A673 (cell line): ENCODE measurements at regions of chr6 and their contacts with region 1.

Region 1: DNA sequence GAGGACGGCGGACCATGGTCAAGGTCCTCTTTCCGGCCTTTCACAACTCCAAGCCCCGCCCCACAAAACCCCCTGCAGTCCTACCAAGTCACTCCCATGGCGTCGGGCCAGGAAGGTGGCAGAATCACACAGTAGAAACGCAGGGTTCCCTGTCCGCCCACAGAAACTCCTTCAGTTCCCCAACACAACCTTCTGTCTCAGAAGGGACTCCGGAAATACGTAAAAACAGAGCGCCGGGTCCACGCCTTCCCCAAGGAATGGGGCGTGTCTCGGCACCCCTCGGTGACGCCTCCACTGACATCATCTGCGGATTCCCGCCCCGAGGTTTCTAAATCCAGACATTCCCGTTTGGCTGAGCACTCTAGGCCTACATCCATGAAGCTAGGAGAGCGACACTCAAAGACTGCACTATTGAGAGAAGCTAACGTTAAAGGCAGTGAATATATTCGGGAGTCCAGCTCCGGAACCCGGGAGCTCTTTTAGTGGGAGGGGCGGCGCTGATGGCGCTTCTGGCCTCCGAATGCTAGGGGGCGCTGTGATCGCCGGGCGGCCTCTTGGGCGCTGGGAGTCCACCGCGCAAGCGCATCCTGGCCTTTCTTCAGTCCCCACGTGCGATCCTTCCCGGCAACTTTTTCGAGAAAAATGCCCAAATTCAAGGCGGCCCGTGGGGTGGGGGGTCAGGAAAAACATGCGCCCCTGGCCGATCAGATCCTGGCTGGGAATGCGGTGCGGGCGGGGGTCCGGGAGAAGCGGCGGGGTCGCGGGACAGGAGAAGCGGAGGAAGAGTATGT is at the starts of genes BYSL and MED20:
- DNase-seq: peak; percentile 95
- H3K4me3 ChIP-seq: peak within 1 kb of the TSS; percentile 66
- H3K27ac ChIP-seq: peak within 1 kb of the TSS; percentile 99
- H3K4me1 ChIP-seq: peaks cover 9% of the 10 kb centered on the region
- H3K27me3 ChIP-seq: no peaks in the 10 kb centered on the region
- CTCF ChIP-seq: peak; percentile 98
- total RNA-seq, gene BYSL: 76.5 and 89.7 TPM in 2 replicates
- total RNA-seq, gene MED20: 31.8 and 39.0 TPM in 2 replicates

Region 2: GRCh38 chr6:41787219-41787917 is 133.7 kb before region 1 on chr6 and contains the start of gene TOMM6:
- CTCF ChIA-PET with region 1: interaction called, 16 read pairs
- POLR2A ChIA-PET with region 1: no interaction called
- intact Hi-C with region 1: loop called (anchors 1 kb)
- DNase-seq: peak; percentile 95
- H3K4me3 ChIP-seq: peak within 1 kb of the TSS; percentile 86
- H3K27ac ChIP-seq: peak within 1 kb of the TSS; percentile 86
- H3K4me1 ChIP-seq: peaks cover 5% of the 10 kb centered on the region
- H3K27me3 ChIP-seq: no peaks in the 10 kb centered on the region
- CTCF ChIP-seq: no peak; the same call in none of the 2 replicates
- total RNA-seq, gene TOMM6: 197 and 206 TPM in 2 replicates

Region 3: DNA sequence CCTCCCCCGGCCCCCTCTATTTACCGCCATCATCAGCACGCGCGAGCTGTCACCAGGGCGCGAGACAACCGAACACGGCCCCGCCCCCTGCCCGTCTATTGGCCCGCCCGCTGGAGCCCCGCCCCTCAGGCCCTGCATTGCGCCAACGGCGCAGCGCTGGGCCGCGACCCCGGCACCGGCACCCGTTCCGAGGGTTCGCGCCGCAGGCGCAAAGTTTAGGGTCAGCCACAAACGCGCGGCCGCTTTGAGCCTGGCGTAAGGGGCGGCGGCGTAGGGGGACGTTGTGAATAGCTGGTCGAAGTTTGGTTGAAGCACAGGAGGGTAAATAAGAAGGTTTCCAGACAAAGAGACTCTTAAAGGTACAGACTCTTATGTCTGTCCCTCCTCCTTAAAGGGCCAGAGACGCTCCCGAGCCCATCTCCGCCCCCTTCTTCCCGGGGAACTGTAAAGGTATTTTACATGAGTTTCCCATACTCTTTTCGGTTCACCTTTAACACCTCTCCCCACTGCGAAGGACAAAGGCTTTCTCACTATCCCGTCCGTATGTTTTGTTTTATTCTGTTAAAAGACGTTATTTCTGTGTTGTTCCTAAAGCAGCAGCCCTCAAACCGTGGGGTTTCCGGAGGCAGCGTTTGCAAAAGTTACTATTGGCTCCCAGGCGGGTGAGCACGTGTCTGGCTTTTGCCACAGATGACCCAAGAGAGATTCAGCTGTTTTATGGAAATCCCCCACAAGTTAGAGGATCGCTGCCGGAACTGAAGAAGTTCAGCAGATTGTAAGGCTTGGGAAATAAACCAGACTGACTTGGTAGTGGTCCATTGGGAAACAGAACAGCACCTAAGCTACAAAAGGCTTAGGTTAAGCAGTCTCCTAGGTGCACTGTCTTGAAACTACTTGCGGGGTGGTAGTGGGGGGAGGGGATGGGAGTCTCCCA is 25.5 kb before region 1 on chr6 and contains the start of gene USP49:
- CTCF ChIA-PET with region 1: interaction called, 13 read pairs
- POLR2A ChIA-PET with region 1: no interaction called
- intact Hi-C with region 1: no loop called
- DNase-seq: peak; percentile 94
- H3K4me3 ChIP-seq: peak within 1 kb of the TSS; percentile 77
- H3K27ac ChIP-seq: peak within 1 kb of the TSS; percentile 81
- H3K4me1 ChIP-seq: peaks cover 11% of the 10 kb centered on the region
- H3K27me3 ChIP-seq: no peaks in the 10 kb centered on the region
- CTCF ChIP-seq: no peak
- total RNA-seq, gene USP49: 10.5 and 13.0 TPM in 2 replicates

Region 4: DNA sequence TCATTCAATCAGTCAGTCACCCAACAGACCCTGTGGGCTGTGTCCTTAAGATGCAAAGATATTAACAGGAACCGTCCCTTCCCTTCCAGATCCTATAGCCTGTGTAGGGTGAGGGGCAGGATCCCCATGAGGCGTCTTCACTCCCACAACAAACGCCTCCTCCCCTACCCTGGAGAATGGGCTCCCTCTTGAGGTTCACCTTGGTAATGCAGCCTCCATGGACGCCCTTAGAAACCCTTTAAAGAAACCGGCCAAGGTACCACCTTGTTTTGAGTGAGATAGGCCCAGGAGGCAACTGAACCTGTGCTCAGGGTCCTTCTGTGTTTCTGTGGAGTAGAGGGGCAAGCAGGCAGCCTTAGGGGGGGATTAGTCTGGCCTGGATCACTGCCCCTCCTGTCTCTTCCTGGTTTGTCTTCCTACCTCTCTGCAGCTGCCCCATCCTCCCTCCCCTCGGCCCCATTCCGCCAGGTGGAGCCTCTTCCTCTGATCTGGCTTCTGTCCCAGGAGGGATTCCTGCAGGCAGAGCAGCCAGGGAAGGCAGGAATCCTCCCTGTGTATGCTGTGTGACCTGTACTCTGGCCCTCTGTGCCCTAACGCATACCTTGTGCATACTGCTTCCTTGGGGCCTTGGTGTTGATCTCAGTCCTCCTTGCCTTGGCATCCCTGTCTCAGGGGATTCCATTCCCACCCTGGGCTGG is 245.5 kb after region 1 on chr6:
- CTCF ChIA-PET with region 1: no interaction called
- POLR2A ChIA-PET with region 1: no interaction called
- intact Hi-C with region 1: no loop called
- DNase-seq: peak; percentile 86
- H3K4me3 ChIP-seq: no peak overlapping the region
- H3K27ac ChIP-seq: no peak overlapping the region
- H3K4me1 ChIP-seq: no peaks in the 10 kb centered on the region
- H3K27me3 ChIP-seq: no peaks in the 10 kb centered on the region
- CTCF ChIP-seq: peak; percentile 90

Region 5: DNA sequence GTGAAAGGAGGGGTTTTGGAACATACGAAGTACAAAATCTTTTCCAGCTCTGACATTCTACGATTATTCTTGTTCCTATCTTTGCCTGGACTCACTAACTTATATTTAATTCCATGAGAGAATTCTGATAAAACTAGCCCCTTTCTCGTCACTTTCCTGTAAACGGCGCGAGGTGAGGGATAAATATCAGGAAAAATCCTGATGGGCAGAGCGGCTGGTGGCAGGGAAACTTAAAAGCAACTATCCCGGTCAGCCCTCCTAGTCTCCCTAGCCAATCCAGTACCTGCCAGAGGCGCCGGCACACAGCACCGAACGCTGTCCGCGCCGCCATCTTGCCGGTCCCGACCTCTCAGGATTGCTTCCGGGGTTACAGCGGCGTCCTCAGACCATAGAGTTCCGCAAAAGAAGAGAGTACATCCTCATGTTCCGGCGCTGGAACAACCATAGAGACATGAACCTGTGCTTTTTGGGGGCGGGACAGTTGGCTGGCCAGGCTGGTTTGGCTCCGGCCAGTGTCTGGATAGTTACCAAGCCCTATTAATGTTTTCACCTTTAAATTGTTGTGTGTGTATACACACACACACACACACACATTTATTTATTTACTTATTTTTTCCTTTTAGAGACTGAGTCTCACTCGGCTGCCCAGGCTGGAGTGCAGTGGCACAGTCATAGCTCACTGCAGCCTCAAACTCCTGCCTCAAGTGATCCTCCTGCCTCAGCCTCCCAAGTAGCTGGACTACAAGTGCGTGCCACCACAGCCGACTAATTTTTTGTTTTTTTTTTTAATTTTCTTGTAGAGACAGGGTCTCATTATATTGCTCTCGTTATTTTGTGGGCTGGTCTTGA is 296.6 kb after region 1 on chr6 and contains the start of gene MRPS10:
- CTCF ChIA-PET with region 1: no interaction called
- POLR2A ChIA-PET with region 1: no interaction called
- intact Hi-C with region 1: loop called (anchors 2 kb)
- DNase-seq: peak; percentile 97
- H3K4me3 ChIP-seq: peak within 1 kb of the TSS; percentile 98
- H3K27ac ChIP-seq: peak within 1 kb of the TSS; percentile 90
- H3K4me1 ChIP-seq: peaks cover 13% of the 10 kb centered on the region
- H3K27me3 ChIP-seq: no peaks in the 10 kb centered on the region
- CTCF ChIP-seq: no peak
- total RNA-seq, gene MRPS10: 50.0 and 52.0 TPM in 2 replicates